ENCODE measurements at regions of chr7 and their contacts with region 1.

Region 1: DNA sequence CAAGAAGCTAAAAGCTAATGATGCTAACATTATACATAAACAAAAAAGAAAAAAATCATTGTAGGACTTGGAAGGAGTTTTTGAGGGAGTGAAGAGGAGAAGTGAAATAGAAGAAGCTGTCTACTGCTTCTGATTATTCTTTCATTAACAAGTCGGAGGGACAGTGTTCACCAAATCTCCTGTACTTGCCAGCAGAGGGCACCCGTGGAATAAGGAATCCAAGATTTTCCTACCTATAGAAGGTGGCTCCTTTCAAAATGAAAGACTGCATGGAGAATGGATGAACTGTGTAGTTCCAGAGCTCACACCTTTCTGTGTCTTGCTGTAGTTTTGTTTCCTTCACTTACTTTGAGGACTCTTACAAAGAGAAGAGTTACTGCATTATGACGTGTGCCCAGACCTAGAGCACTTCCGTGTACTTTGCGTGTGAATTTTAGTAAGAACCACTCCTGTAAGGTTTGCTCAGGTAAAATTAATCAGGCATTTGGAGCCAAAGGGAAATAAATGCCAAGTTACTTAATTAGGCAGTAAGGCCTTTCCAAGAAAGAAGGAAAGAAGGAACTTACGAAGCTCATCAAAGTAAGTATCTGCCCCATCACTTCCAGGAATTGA is 145.1 kb downstream of the SEMA3D start:
- DNase-seq: peak; percentile 52 to 71 (median 58)
- H3K4me3 ChIP-seq: no peak overlapping the region
- H3K27ac ChIP-seq: no peak overlapping the region
- H3K4me1 ChIP-seq: no peaks in the 10 kb centered on the region
- H3K27me3 ChIP-seq: no peaks in the 10 kb centered on the region

Region 2: DNA sequence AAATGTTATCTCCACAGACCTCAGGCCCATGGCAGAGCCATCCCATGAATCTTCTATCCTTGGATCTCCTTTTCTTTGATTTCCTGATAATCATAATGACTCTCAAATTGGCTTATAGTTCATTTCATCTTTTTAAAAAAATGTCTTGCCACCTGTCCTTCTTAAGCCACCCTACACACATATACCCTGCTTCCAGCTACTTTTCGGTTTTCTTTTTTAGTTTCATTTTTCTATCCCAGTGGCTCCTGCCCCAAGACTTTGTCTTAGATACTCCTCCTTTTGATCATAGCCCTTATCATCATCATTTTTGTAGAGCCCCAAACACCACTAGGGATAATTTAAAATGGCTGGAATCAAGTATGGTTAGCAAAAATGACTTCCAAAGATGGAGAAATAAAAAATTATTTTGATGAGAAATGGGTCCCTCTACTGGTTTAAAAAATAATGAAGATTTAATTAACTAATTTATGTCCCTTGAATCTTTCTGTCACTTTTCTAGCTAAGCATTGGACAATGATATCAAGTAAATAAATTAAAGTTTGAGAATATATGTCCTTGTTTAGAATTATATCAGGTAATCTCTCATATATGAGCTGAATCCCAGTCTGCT is 422.4 kb after region 1 on chr7:
- CTCF ChIA-PET with region 1: interaction called, 28 read pairs
- POLR2A ChIA-PET with region 1: no interaction called
- DNase-seq: peak; percentile 11 to 33 (median 25)
- H3K4me3 ChIP-seq: no peak overlapping the region
- H3K27ac ChIP-seq: no peak overlapping the region
- H3K4me1 ChIP-seq: peaks cover 0 to 3% (median 0%) of the 10 kb centered on the region in 4 experiments
- H3K27me3 ChIP-seq: no peaks in the 10 kb centered on the region

Region 3: GRCh38 chr7:85554236-85555178 is 512.8 kb after region 1 on chr7:
- CTCF ChIA-PET with region 1: interaction called, 12 read pairs
- POLR2A ChIA-PET with region 1: no interaction called
- DNase-seq: peak; percentile 56 to 81 (median 77)
- H3K4me3 ChIP-seq: no peak overlapping the region
- H3K27ac ChIP-seq: no peak overlapping the region
- H3K4me1 ChIP-seq: no peaks in the 10 kb centered on the region
- H3K27me3 ChIP-seq: no peaks in the 10 kb centered on the region

Region 4: GRCh38 chr7:85750454-85750949 is 708.8 kb after region 1 on chr7:
- CTCF ChIA-PET with region 1: interaction called, 14 read pairs
- POLR2A ChIA-PET with region 1: no interaction called
- DNase-seq: peak; percentile 29 to 64 (median 59)
- H3K4me3 ChIP-seq: no peak overlapping the region
- H3K27ac ChIP-seq: no peak overlapping the region
- H3K4me1 ChIP-seq: peaks cover 0 to 2% (median 0%) of the 10 kb centered on the region in 4 experiments
- H3K27me3 ChIP-seq: no peaks in the 10 kb centered on the region

Region 5: GRCh38 chr7:85829817-85830432 is 788.2 kb after region 1 on chr7:
- CTCF ChIA-PET with region 1: interaction called, 12 read pairs
- POLR2A ChIA-PET with region 1: no interaction called
- DNase-seq: peak; percentile 2 to 32 (median 24)
- H3K4me3 ChIP-seq: no peak overlapping the region
- H3K27ac ChIP-seq: no peak overlapping the region
- H3K4me1 ChIP-seq: no peaks in the 10 kb centered on the region
- H3K27me3 ChIP-seq: no peaks in the 10 kb centered on the region

Measured in common myeloid progenitor, CD34-positive (primary cell).